Heart right ventricle (tissue), 16 donors: ENCODE measurements at regions of chr7 and their contacts with region 1.

Region 1: GRCh38 chr7:150778738-150779301 is 21.3 kb downstream of the TMEM176B start:
- DNase-seq: peak; percentile 85 to 87
- ATAC-seq: peak; percentile 74 to 94 (median 89)
- H3K4me3 ChIP-seq: no peak overlapping the region
- H3K27ac ChIP-seq: no peak overlapping the region
- H3K4me1 ChIP-seq: peaks cover 0 to 31% (median 0%) of the 10 kb centered on the region in 9 donors
- H3K27me3 ChIP-seq: no peaks in the 10 kb centered on the region
- CTCF ChIP-seq: peak; percentile 78 to 95 (median 90)

Region 2: GRCh38 chr7:150824379-150825177 is 45.8 kb after region 1 on chr7:
- intact Hi-C with region 1: loop called in 2 of 10 experiments (anchors 5 kb)
- DNase-seq: no peak
- ATAC-seq: peak in 6 of 8 donors; percentile 25 to 58 (median 30)
- H3K4me3 ChIP-seq: no peak overlapping the region
- H3K27ac ChIP-seq: peak overlapping the region in 9 of 10 donors; percentile 9 to 79 (median 68)
- H3K4me1 ChIP-seq: peaks cover 0 to 49% (median 18%) of the 10 kb centered on the region in 9 donors
- H3K27me3 ChIP-seq: no peaks in the 10 kb centered on the region
- CTCF ChIP-seq: no peak

Region 3: GRCh38 chr7:150860291-150860977 is 81.6 kb after region 1 on chr7:
- intact Hi-C with region 1: loop called in 1 of 10 experiments (anchors 5 kb)
- DNase-seq: no peak
- ATAC-seq: peak in 3 of 8 donors; percentile 38 to 55 (median 43)
- H3K4me3 ChIP-seq: no peak overlapping the region
- H3K27ac ChIP-seq: no peak overlapping the region
- H3K4me1 ChIP-seq: no peaks in the 10 kb centered on the region
- H3K27me3 ChIP-seq: peaks cover 0 to 10% (median 0%) of the 10 kb centered on the region in 7 donors
- CTCF ChIP-seq: peak in 8 of 9 donors; percentile 7 to 50 (median 40)

Region 4: DNA sequence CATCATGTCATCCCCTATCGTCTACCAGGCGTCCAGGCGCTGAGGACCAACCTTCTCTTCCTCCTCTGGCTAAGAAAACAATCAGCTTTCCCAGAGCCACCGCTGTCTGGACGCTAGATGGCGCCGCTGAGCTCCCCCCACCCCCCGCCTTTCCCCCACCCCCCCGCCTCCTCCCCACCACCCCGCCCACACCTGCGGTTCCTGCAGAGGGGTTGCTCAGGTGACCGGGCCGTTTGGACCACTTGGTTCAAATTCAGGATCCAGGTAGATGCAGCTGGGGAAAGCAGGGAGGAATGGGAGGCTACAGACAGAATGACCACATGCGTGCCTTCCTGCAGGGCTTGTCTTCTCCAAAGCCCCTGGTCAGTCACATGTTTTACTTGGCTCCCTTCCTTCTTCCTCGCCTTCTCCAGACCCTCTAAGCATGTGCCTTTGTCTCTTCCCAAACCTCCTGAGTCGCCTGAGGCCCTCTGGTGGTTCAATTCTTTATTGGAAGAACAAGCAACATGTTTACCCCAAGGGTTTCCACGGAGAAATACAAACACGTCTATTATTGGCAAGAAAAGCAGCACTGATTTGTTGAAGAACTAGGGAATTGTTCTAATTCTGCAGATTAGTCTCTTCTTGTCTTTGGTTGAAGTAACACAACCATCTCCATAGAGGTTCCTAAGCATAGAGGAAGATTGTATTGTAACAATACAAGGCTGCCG is 98.2 kb after region 1 on chr7:
- intact Hi-C with region 1: loop called in 9 of 10 experiments (anchors 2 to 5 kb)
- DNase-seq: peak; percentile 56 to 81
- ATAC-seq: peak; percentile 76 to 96 (median 88)
- H3K4me3 ChIP-seq: no peak overlapping the region
- H3K27ac ChIP-seq: peak overlapping the region in 1 of 10 donors; percentile 31
- H3K4me1 ChIP-seq: peaks cover 0 to 13% (median 6%) of the 10 kb centered on the region in 9 donors
- H3K27me3 ChIP-seq: peaks cover 0 to 4% (median 0%) of the 10 kb centered on the region in 7 donors
- CTCF ChIP-seq: peak; percentile 38 to 70 (median 58)

Region 5: GRCh38 chr7:151003572-151003971 is 224.8 kb after region 1 on chr7:
- intact Hi-C with region 1: no loop called
- DNase-seq: no peak
- ATAC-seq: no peak
- H3K4me3 ChIP-seq: no peak overlapping the region
- H3K27ac ChIP-seq: no peak overlapping the region
- H3K4me1 ChIP-seq: peaks cover 10 to 31% (median 24%) of the 10 kb centered on the region in 9 donors
- H3K27me3 ChIP-seq: no peaks in the 10 kb centered on the region
- CTCF ChIP-seq: no peak

Region 6: DNA sequence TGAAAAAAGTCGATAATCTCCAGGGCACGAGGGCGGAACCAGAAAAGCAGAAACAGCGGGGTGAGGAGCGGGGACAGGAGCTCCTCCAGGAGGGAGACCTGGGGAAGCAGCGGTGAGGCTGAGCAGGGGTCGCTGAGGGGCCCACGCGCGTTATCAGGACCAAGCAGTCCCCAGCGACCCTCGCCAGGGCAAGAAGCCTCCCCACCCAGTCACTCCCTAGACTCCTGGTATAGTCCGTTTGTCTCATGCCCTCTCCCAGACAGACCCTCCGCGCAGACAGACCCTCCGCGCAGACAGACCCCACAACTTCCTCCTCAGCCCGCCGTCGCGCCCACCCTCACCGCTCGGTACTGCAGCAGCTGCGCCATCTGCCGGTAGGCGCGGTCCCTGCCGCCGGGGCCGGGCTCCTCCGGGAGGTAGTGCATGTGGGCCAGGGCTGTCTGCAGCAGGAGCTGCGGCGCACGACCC is 239.2 kb after region 1 on chr7:
- intact Hi-C with region 1: loop called in 1 of 10 experiments (anchors 5 kb)
- DNase-seq: peak; percentile 67 to 77
- ATAC-seq: peak; percentile 55 to 80 (median 69)
- H3K4me3 ChIP-seq: peak overlapping the region in 7 of 10 donors; percentile 9 to 37 (median 22)
- H3K27ac ChIP-seq: no peak overlapping the region
- H3K4me1 ChIP-seq: peaks cover 9 to 49% (median 31%) of the 10 kb centered on the region in 9 donors
- H3K27me3 ChIP-seq: peaks cover 0 to 56% (median 53%) of the 10 kb centered on the region in 7 donors
- CTCF ChIP-seq: peak; percentile 85 to 97 (median 95)